Ovary (tissue), 10 donors: ENCODE measurements at regions of chr10 and their contacts with region 1.

Region 1: GRCh38 chr10:97553575-97554031 is 19.0 kb upstream of the ANKRD2 start:
- DNase-seq: peak; percentile 60 to 82 (median 72)
- H3K4me3 ChIP-seq: no peak overlapping the region
- H3K27ac ChIP-seq: no peak overlapping the region
- H3K4me1 ChIP-seq: no peaks in the 10 kb centered on the region
- H3K27me3 ChIP-seq: no peaks in the 10 kb centered on the region
- CTCF ChIP-seq: peak; percentile 54 to 71 (median 71)
- EP300 ChIP-seq: no peak
- POLR2A ChIP-seq: no peak

Region 2: GRCh38 chr10:97200616-97201015 is 353.0 kb before region 1 on chr10:
- intact Hi-C with region 1: no loop called
- DNase-seq: no peak
- H3K4me3 ChIP-seq: no peak overlapping the region
- H3K27ac ChIP-seq: no peak overlapping the region
- H3K4me1 ChIP-seq: peaks cover 2% of the 10 kb centered on the region
- H3K27me3 ChIP-seq: no peaks in the 10 kb centered on the region
- CTCF ChIP-seq: no peak
- EP300 ChIP-seq: no peak
- POLR2A ChIP-seq: no peak

Region 3: DNA sequence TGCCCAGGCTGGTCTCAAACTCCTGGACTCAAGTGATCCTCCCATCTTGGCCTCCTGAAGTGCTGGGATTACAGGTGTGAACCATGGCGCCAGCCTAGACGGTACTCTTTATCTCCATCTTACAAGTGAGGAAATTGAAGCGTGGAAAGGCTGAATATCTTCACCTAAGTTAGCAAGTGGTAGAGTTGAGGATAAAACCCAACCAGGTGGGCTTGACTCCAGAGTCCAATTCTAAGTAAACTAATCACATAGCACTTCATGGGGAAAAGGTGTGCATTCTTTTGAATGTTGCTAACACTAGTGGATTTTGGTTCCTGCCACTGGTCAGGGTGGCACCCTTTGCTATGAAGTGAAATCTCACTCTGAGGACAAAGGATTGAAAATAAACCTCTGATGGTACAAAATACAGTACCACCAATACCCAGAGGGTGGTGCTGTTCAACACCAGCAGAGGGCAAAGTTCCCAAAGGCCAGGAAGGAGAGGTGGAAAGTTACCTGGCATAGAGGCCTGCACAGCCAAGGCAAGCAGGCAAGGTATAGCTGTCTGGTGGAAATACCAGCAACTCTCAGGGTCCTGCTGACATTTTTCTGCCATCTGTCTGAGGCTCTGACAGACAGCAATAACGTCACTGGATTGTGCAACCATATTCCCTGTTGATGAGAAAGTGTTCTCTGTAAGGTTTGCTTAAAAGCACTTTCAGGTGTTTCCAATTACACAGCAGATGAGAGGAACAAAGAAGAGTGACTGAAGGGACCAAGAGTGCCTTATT is 90.1 kb before region 1 on chr10:
- intact Hi-C with region 1: loop called in 2 of 4 experiments (anchors 5 kb)
- DNase-seq: peak in 1 of 5 donors; percentile 19
- H3K4me3 ChIP-seq: no peak overlapping the region
- H3K27ac ChIP-seq: no peak overlapping the region
- H3K4me1 ChIP-seq: no peaks in the 10 kb centered on the region
- H3K27me3 ChIP-seq: no peaks in the 10 kb centered on the region
- CTCF ChIP-seq: peak; percentile 62 to 69 (median 63)
- EP300 ChIP-seq: no peak
- POLR2A ChIP-seq: no peak

Region 4: GRCh38 chr10:97701438-97702069 is 148.0 kb after region 1 on chr10:
- intact Hi-C with region 1: no loop called
- DNase-seq: peak in 1 of 5 donors; percentile 64
- H3K4me3 ChIP-seq: no peak overlapping the region
- H3K27ac ChIP-seq: no peak overlapping the region
- H3K4me1 ChIP-seq: no peaks in the 10 kb centered on the region
- H3K27me3 ChIP-seq: no peaks in the 10 kb centered on the region
- CTCF ChIP-seq: peak; percentile 47 to 75 (median 64)
- EP300 ChIP-seq: no peak
- POLR2A ChIP-seq: no peak